PC-9 (cell line): ENCODE measurements at regions of chr11 and their contacts with region 1.

Region 1: DNA sequence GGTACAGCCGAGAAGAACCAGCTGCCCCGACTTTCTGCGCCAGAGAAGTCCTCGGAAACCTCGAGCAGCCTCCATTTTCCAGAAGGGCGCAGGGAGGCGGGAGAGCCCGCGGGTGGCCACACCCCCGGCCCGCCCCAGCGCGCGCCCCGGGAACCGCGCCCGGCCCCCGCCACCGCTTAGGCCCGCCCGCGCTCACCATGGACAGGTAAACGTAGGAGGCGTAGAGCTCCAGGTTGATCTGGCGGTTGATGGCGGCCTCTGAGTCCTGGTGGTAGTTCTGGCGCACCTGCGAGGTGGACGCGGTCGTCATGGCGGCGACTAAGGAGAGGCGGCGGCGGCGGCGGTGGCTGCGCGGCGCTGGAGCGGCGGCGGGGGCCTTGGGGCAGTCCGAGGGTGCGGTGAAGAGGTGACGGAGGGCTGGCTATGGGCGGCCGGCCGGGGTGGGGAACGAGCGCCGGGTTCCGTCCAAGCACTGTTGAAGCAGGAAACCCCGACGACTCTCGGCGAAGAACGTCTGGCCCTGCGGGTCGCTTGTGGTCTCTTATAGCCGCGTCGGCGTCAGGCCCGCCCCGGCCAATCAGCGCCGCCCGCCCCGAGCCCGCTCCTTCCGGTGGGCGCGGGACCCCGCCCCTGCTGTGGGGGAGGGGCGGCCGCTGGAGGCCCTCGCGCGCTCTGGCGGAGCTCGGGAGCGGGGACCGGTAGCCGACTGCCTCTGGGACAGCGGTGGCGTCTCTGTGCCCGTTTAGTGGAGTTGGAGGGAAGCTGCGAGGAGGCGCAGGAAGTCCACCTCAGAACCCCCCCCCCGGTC is at the start of gene FTH1:
- DNase-seq: peak; percentile 79 to 96
- H3K4me3 ChIP-seq: peak within 1 kb of the TSS; percentile 97
- H3K27ac ChIP-seq: peak within 1 kb of the TSS; percentile 99
- H3K4me1 ChIP-seq: peaks cover 63% of the 10 kb centered on the region
- H3K27me3 ChIP-seq: no peaks in the 10 kb centered on the region
- CTCF ChIP-seq: no peak
- total RNA-seq, gene FTH1: 6,804 and 8,986 TPM in 2 replicates

Region 2: GRCh38 chr11:61816736-61817455 is 150.4 kb before region 1 on chr11 and contains the start of gene FADS1:
- CTCF ChIA-PET with region 1: no interaction called
- POLR2A ChIA-PET with region 1: interaction called, 7 read pairs
- intact Hi-C with region 1: loop called (anchors 1 kb)
- DNase-seq: peak; percentile 88 to 96
- H3K4me3 ChIP-seq: peak within 1 kb of the TSS; percentile 95
- H3K27ac ChIP-seq: peak within 1 kb of the TSS; percentile 80
- H3K4me1 ChIP-seq: peaks cover 42% of the 10 kb centered on the region
- H3K27me3 ChIP-seq: no peaks in the 10 kb centered on the region
- CTCF ChIP-seq: peak; percentile 71
- total RNA-seq, gene FADS1: 114 and 150 TPM in 2 replicates

Region 3: GRCh38 chr11:61899146-61899841 is 68.0 kb before region 1 on chr11:
- CTCF ChIA-PET with region 1: interaction called, 5 read pairs
- POLR2A ChIA-PET with region 1: no interaction called
- intact Hi-C with region 1: loop called (anchors 5 kb)
- DNase-seq: peak; percentile 73 to 90
- H3K4me3 ChIP-seq: no peak overlapping the region
- H3K27ac ChIP-seq: no peak overlapping the region
- H3K4me1 ChIP-seq: no peaks in the 10 kb centered on the region; the same call in 1 of the 2 replicates
- H3K27me3 ChIP-seq: no peaks in the 10 kb centered on the region
- CTCF ChIP-seq: peak; percentile 100

Region 4: DNA sequence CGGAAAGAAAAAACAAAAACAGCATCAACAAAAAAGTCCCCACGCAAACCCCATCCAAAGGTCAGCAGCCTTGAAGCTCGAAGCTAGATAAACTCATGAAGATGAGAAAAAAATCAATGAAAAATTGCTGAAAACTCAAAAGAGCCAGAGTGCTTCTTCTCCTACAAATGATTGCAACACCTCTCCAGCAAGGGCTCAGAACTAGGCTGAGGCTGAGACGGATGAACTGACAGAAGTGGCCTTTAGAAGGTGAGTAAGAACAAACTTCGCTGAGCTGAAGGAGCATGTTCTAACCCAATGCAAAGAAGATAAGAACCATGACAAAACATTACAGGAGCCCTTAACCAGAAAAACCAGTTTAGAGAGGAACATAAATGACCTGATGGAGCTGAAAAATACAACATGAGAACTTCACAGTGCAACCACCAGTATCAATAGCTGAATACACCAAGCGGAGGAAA is 18.6 kb after region 1 on chr11:
- CTCF ChIA-PET with region 1: no interaction called
- POLR2A ChIA-PET with region 1: interaction called, 6 read pairs
- intact Hi-C with region 1: loop called (anchors 1 kb)
- DNase-seq: peak in 1 of 2 experiments; percentile 95
- H3K4me3 ChIP-seq: peak overlapping the region; percentile 26; the same call in 1 of the 2 replicates
- H3K27ac ChIP-seq: peak overlapping the region; percentile 49
- H3K4me1 ChIP-seq: peaks cover 31% of the 10 kb centered on the region
- H3K27me3 ChIP-seq: no peaks in the 10 kb centered on the region
- CTCF ChIP-seq: no peak

Region 5: GRCh38 chr11:62025487-62026105 is 58.3 kb after region 1 on chr11:
- CTCF ChIA-PET with region 1: interaction called, 9 read pairs
- POLR2A ChIA-PET with region 1: interaction called, 5 read pairs
- intact Hi-C with region 1: loop called (anchors 1 kb)
- DNase-seq: peak; percentile 73 to 100
- H3K4me3 ChIP-seq: peak overlapping the region; percentile 22; the same call in 1 of the 2 replicates
- H3K27ac ChIP-seq: peak overlapping the region; percentile 89
- H3K4me1 ChIP-seq: peaks cover 36% of the 10 kb centered on the region
- H3K27me3 ChIP-seq: no peaks in the 10 kb centered on the region
- CTCF ChIP-seq: no peak

Region 6: DNA sequence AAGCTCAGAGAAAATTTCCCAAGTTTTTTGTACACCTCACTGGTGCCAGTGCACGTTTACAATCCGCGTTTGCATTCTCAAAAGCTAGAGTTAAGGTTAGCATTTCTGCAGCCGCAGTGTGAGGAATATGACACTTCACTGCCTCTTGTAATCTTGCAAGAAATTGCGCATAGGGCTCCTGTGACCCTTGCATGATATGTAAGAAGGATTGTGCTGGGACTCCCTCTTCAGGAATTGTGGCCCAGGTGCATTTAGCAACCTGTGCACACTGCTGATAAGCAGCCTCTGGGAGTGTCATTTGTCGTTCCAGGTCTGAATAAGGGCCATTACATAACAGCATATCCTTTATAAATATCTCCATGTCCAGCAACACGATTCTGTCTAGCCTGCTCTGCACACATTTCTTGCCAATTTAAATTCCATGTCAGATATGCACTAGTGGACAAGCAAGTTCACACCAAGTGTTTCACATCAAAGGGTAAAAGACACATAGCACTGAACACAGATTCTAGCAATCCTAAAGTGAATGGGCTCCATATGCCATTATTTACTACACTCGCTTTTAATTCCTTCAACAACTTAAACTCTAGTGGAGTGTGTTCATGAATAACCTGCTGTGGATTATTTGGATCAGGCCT is 87.3 kb after region 1 on chr11:
- CTCF ChIA-PET with region 1: interaction called, 3 read pairs
- POLR2A ChIA-PET with region 1: interaction called, 7 read pairs
- intact Hi-C with region 1: loop called (anchors 1 kb)
- DNase-seq: peak; percentile 80 to 95
- H3K4me3 ChIP-seq: no peak overlapping the region; the same call in 1 of the 2 replicates
- H3K27ac ChIP-seq: peak overlapping the region; percentile 85
- H3K4me1 ChIP-seq: peaks cover 53% of the 10 kb centered on the region
- H3K27me3 ChIP-seq: no peaks in the 10 kb centered on the region
- CTCF ChIP-seq: peak; percentile 89

Region 7: GRCh38 chr11:62223095-62223494 is 255.8 kb after region 1 on chr11:
- CTCF ChIA-PET with region 1: no interaction called
- POLR2A ChIA-PET with region 1: no interaction called
- intact Hi-C with region 1: no loop called
- DNase-seq: no peak
- H3K4me3 ChIP-seq: no peak overlapping the region
- H3K27ac ChIP-seq: no peak overlapping the region
- H3K4me1 ChIP-seq: no peaks in the 10 kb centered on the region
- H3K27me3 ChIP-seq: peaks cover 9% of the 10 kb centered on the region
- CTCF ChIP-seq: no peak